Activated CD4-positive, alpha-beta memory T cell treated with anti-CD3 and anti-CD28 coated beads, Interleukin-2, amount 10 ng/mL, durations not matched to agents 7 days and 5 days (primary cell): ENCODE measurements at regions of chr1 and their contacts with region 1.

Region 1: DNA sequence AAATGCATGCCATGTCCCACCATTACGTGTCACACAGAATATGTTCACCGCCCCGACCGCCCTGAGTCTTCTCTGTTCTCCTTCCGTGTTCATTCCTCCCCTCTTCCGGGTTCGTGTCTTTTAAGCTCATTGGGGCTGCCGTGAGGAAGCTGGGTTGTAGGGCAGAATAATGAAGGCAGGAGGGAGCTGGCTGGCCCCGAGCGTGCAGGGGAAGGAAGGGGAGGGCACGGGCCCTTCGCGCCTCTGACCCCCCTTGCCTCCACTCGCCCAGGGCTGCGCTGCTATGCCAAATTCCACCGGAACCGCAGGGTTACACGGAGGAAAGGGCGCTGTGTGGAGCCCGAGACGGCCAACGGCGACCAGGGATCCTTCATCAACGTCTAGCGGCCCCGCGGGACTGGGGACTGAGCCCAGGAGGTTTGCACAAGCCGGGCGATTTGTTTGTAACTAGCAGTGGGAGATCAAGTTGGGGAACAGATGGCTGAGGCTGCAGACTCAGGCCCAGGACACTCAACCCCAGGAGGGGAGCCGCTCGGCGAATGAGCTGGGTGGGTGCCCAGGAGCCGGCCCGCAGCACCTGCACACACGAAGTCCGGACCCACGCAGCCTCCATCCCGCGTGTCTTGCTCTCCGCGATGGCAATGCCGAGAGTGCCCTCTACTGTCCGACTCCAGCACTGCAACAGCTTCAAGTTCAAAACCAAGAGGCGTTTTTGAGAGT is 16.5 kb upstream of the AGTRAP start:
- DNase-seq: peak; percentile 87
- H3K4me3 Mint-ChIP-seq: peak overlapping the region; percentile 56
- H3K27ac Mint-ChIP-seq: peak overlapping the region; percentile 85
- H3K4me1 Mint-ChIP-seq: peaks cover 19% of the 10 kb centered on the region
- H3K27me3 Mint-ChIP-seq: peaks cover 9% of the 10 kb centered on the region

Region 2: DNA sequence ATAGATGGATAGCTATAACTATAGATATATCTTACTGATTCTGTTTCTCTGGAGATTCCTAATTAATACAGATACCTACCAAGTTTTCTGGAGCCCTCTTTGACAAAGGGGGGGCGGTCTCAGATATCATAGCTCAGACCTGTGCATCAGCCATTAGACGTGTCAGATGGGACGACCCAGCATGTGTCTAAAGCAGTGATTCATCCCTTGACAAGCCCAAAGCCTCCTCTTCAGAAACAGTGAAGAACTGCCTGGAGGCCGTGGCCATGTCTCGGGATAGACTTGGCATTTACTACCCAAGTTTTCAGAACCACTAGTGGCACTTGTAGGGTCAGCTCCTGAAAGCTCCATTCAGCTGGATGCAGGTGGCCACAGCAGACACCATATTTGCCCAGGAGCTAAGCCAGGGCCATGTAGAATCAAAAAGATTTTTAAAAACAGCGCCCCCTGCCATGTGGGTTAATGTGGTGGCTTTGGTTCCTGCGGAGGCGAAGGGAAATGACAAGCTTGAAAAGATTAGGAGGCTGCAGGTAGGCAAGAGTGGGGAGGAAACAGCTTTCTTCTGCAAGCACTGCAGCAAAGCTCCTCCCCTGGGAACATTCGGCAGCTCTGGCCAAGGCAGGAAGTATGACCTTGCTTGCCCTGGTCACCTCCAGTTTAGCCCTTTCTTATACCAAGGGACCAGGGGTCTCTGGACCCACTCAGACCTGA is 147.4 kb before region 1 on chr1:
- CTCF ChIA-PET with region 1: no interaction called
- POLR2A ChIA-PET with region 1: no interaction called
- DNase-seq: peak; percentile 21
- H3K4me3 Mint-ChIP-seq: no peak overlapping the region
- H3K27ac Mint-ChIP-seq: no peak overlapping the region
- H3K4me1 Mint-ChIP-seq: no peaks in the 10 kb centered on the region
- H3K27me3 Mint-ChIP-seq: no peaks in the 10 kb centered on the region

Region 3: DNA sequence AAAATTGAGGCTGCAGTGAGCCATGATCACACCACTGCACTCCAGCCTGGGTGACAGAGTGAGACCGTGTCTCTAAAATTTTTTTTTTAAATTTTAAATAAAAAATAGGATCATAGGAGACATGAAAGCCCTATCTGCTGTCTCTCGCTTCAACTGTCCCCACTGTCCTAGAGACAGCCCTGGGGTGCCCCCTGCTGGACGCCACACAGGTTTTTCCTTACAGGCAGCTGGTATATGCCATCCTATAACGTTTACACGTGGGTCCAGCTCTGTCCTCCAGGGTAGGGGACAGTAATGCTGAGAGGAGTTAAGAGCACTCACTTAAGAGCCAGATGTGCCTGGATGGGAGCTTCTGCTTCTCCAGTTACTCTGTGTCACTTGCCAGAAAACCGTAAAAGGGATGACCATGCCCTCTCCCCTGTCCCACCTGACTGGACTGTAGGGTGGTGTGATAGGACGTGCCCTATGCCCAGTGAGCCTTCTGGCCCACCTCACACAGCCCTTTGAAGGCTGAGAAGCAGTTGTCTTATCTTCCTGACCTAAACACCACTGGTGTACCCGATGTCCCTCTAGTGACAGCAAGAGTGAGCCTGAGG is 73.7 kb before region 1 on chr1:
- CTCF ChIA-PET with region 1: interaction called, 96 read pairs
- POLR2A ChIA-PET with region 1: interaction called, 28 read pairs
- DNase-seq: peak; percentile 85
- H3K4me3 Mint-ChIP-seq: no peak overlapping the region
- H3K27ac Mint-ChIP-seq: no peak overlapping the region
- H3K4me1 Mint-ChIP-seq: peaks cover 17% of the 10 kb centered on the region
- H3K27me3 Mint-ChIP-seq: peaks cover 7% of the 10 kb centered on the region

Region 4: GRCh38 chr1:11661103-11661502 is 58.4 kb before region 1 on chr1:
- CTCF ChIA-PET with region 1: interaction called, 65 read pairs
- POLR2A ChIA-PET with region 1: interaction called, 47 read pairs
- DNase-seq: no peak
- H3K4me3 Mint-ChIP-seq: no peak overlapping the region
- H3K27ac Mint-ChIP-seq: no peak overlapping the region
- H3K4me1 Mint-ChIP-seq: peaks cover 15% of the 10 kb centered on the region
- H3K27me3 Mint-ChIP-seq: no peaks in the 10 kb centered on the region

Region 5: GRCh38 chr1:11681071-11681771 is 38.3 kb before region 1 on chr1 and contains the start of gene MAD2L2:
- CTCF ChIA-PET with region 1: interaction called, 10 read pairs
- POLR2A ChIA-PET with region 1: interaction called, 19 read pairs
- DNase-seq: peak; percentile 91
- H3K4me3 Mint-ChIP-seq: peak within 1 kb of the TSS; percentile 83
- H3K27ac Mint-ChIP-seq: peak within 1 kb of the TSS; percentile 89
- H3K4me1 Mint-ChIP-seq: peaks cover 16% of the 10 kb centered on the region
- H3K27me3 Mint-ChIP-seq: peaks cover 15% of the 10 kb centered on the region
- total RNA-seq, gene MAD2L2: 59.2 to 63.1 TPM

Region 6: GRCh38 chr1:11730429-11730891 is 11.0 kb after region 1 on chr1:
- CTCF ChIA-PET with region 1: interaction called, 16 read pairs
- POLR2A ChIA-PET with region 1: interaction called, 20 read pairs
- DNase-seq: peak; percentile 71
- H3K4me3 Mint-ChIP-seq: peak overlapping the region; percentile 66
- H3K27ac Mint-ChIP-seq: peak overlapping the region; percentile 88
- H3K4me1 Mint-ChIP-seq: peaks cover 50% of the 10 kb centered on the region
- H3K27me3 Mint-ChIP-seq: no peaks in the 10 kb centered on the region

Region 7: GRCh38 chr1:11749203-11749689 is 29.8 kb after region 1 on chr1:
- CTCF ChIA-PET with region 1: interaction called, 10 read pairs
- POLR2A ChIA-PET with region 1: interaction called, 5 read pairs
- DNase-seq: peak; percentile 78
- H3K4me3 Mint-ChIP-seq: no peak overlapping the region
- H3K27ac Mint-ChIP-seq: peak overlapping the region; percentile 74
- H3K4me1 Mint-ChIP-seq: peaks cover 42% of the 10 kb centered on the region
- H3K27me3 Mint-ChIP-seq: no peaks in the 10 kb centered on the region

Region 8: GRCh38 chr1:11813021-11813420 is 93.5 kb after region 1 on chr1:
- CTCF ChIA-PET with region 1: no interaction called
- POLR2A ChIA-PET with region 1: no interaction called
- DNase-seq: no peak
- H3K4me3 Mint-ChIP-seq: no peak overlapping the region
- H3K27ac Mint-ChIP-seq: no peak overlapping the region
- H3K4me1 Mint-ChIP-seq: peaks cover 15% of the 10 kb centered on the region
- H3K27me3 Mint-ChIP-seq: no peaks in the 10 kb centered on the region